Gastrocnemius medialis (tissue), 4 donors: ENCODE measurements at regions of chr15 and their contacts with region 1.

Region 1: GRCh38 chr15:45402162-45402954 is 24.0 kb upstream of the GATM start:
- DNase-seq: peak; percentile 95 to 97
- ATAC-seq: peak; percentile 98
- H3K4me3 ChIP-seq: peak overlapping the region; percentile 86 to 95 (median 92)
- H3K27ac ChIP-seq: peak overlapping the region; percentile 89 to 97 (median 94)
- H3K4me1 ChIP-seq: peaks cover 20 to 30% of the 10 kb centered on the region in 2 donors
- H3K27me3 ChIP-seq: no peaks in the 10 kb centered on the region
- CTCF ChIP-seq: no peak
- POLR2A ChIP-seq: peak; percentile 67 to 76

Region 2: GRCh38 chr15:45279024-45279698 is 123.2 kb before region 1 on chr15:
- in situ Hi-C with region 1: loop called in 1 of 4 experiments (anchors 10 kb)
- intact Hi-C with region 1: loop called (anchors 1 kb)
- DNase-seq: peak; percentile 97 to 98
- ATAC-seq: peak; percentile 99
- H3K4me3 ChIP-seq: peak overlapping the region; percentile 58 to 82 (median 70)
- H3K27ac ChIP-seq: peak overlapping the region; percentile 81 to 95 (median 87)
- H3K4me1 ChIP-seq: peaks cover 5 to 13% of the 10 kb centered on the region in 2 donors
- H3K27me3 ChIP-seq: no peaks in the 10 kb centered on the region
- CTCF ChIP-seq: no peak
- POLR2A ChIP-seq: peak; percentile 83 to 87

Region 3: GRCh38 chr15:45307230-45307924 is 95.0 kb before region 1 on chr15:
- in situ Hi-C with region 1: loop called in 2 of 4 experiments (anchors 10 kb)
- intact Hi-C with region 1: loop called (anchors 1 kb)
- DNase-seq: no peak
- ATAC-seq: peak in 1 of 2 donors; percentile 30
- H3K4me3 ChIP-seq: no peak overlapping the region
- H3K27ac ChIP-seq: no peak overlapping the region
- H3K4me1 ChIP-seq: peaks cover 0 to 3% of the 10 kb centered on the region in 2 donors
- H3K27me3 ChIP-seq: no peaks in the 10 kb centered on the region
- CTCF ChIP-seq: peak in 2 of 5 experiments; percentile 34 to 42
- POLR2A ChIP-seq: no peak

Region 4: DNA sequence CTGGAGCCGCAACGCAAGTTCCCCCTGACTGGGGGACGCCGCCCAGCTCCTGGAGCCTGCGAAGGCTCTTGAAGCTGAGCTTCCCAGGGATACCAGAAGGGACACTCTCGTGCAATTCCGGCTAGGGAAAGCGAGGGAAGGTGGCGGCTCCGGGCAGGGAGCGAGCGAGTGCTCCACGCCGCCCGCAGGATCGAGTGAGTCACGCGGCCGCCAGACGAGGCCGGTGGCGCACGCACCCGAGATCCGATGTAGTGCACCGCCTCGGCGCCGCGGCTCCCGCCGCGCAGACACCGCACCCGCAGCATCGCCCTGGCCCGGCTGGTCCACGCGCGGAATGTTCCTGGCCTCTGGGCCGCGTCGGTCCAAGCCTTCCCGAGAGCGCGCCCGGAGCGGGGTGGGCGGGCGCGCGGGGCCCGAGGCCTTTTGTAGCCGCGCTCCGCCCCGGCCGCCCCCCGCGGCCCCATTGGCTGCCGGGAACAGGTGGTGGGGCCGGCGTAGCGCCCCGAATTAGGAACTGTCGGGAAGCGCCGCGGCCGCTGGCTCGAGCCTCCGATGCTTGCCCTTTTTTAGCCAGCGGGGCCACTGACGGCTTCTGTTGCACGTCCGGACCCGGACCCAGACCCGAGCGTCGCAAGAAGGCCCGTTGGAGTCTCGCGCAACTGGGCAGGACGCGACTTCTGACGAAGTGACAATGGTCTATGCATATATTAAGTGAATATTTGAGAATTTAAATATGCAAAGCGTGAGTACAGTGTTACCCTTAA is 24.0 kb before region 1 on chr15 and contains the start of gene GATM:
- in situ Hi-C with region 1: no loop called
- intact Hi-C with region 1: loop called (anchors 1 kb)
- DNase-seq: peak; percentile 71
- ATAC-seq: peak; percentile 78 to 94
- H3K4me3 ChIP-seq: peak within 1 kb of the TSS; percentile 60 to 86 (median 71)
- H3K27ac ChIP-seq: peak within 1 kb of the TSS; percentile 78 to 88 (median 82)
- H3K4me1 ChIP-seq: peaks cover 25 to 31% of the 10 kb centered on the region in 2 donors
- H3K27me3 ChIP-seq: no peaks in the 10 kb centered on the region
- CTCF ChIP-seq: peak; percentile 22 to 59 (median 51)
- POLR2A ChIP-seq: peak; percentile 84 to 92
- total RNA-seq, gene GATM: 18.0 to 92.1 (median 35.3) TPM

Region 5: DNA sequence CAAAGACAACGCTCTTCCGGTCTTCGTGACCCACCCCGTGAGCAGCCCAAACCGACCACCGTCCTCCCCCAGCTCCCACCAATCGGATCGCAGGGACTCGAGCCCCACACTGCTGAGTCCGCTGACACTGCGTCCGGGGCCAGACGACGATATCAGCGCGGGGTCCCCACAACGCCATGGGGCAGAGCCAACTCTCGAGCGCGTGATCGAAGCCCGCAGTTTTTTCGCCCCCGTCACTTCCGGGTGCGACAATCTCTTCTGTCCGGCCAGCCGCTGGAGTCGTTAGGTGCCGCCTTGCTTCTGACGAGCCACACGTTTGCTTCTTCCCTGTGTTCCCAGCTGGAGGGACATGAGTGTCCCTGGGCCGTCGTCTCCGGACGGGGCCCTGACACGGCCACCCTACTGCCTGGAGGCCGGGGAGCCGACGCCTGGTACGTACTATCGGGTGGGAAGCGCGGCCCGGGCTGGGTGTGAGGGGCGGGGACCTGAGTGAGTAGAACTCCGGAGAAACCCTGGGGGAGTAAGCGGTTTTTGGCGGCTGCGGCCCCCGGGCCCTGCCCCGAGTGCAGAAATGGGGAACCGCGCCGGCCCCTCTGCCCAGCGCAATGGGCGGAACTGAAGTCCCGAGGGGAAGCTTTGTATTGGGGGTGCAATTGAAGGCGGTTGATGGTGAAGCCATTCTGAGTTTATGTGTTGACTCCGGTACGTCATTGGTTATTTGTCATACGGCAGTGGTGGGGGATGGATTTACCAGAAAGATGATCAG is 184.9 kb after region 1 on chr15 and contains the start of gene BLOC1S6:
- in situ Hi-C with region 1: no loop called
- intact Hi-C with region 1: loop called (anchors 2 kb)
- DNase-seq: peak; percentile 78 to 82
- ATAC-seq: peak; percentile 96
- H3K4me3 ChIP-seq: peak within 1 kb of the TSS; percentile 87 to 98 (median 92)
- H3K27ac ChIP-seq: peak within 1 kb of the TSS; percentile 95 to 100 (median 97)
- H3K4me1 ChIP-seq: peaks cover 33 to 37% of the 10 kb centered on the region in 2 donors
- H3K27me3 ChIP-seq: no peaks in the 10 kb centered on the region
- CTCF ChIP-seq: peak in 1 of 5 experiments; percentile 15
- POLR2A ChIP-seq: peak; percentile 68 to 72
- total RNA-seq, gene BLOC1S6: 32.9 to 38.2 (median 36.6) TPM

Region 6: DNA sequence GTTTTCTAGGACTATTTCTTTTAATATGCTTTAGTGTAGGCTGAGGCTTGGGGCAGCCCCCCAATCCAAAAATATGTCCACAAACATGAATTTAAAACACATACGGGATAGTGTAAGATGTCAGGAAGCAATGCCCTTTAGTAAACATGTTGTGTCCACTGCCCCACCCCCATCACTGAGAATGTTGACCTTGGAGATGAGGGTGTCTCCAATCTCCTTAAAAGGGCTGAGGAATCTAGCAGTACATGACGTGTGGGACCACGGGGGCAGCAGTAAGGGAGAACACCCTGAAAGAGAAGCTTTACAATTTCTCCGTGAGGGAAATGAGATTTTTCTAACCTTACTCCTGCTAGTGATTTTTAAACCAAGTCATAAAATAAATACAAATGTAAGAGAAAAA is 317.1 kb after region 1 on chr15:
- in situ Hi-C with region 1: no loop called
- intact Hi-C with region 1: no loop called
- DNase-seq: no peak
- ATAC-seq: no peak
- H3K4me3 ChIP-seq: no peak overlapping the region
- H3K27ac ChIP-seq: no peak overlapping the region
- H3K4me1 ChIP-seq: peaks cover 0 to 3% of the 10 kb centered on the region in 2 donors
- H3K27me3 ChIP-seq: no peaks in the 10 kb centered on the region
- CTCF ChIP-seq: no peak
- POLR2A ChIP-seq: no peak